CD8-positive, alpha-beta T cell (primary cell): ENCODE measurements at regions of chr19 and their contacts with region 1.

Region 1: GRCh38 chr19:21202865-21203494 is 61.1 kb downstream of the ZNF431 start:
- DNase-seq: peak in 5 of 9 experiments; percentile 16 to 70 (median 22)
- ATAC-seq: peak; percentile 31
- H3K4me3 ChIP-seq: no peak overlapping the region
- H3K4me3 Mint-ChIP-seq: no peak overlapping the region
- H3K27ac ChIP-seq: no peak overlapping the region
- H3K27ac Mint-ChIP-seq: no peak overlapping the region
- H3K4me1 ChIP-seq: no peaks in the 10 kb centered on the region
- H3K4me1 Mint-ChIP-seq: no peaks in the 10 kb centered on the region
- H3K27me3 ChIP-seq: no peaks in the 10 kb centered on the region
- H3K27me3 Mint-ChIP-seq: peaks cover 12% of the 10 kb centered on the region
- CTCF ChIP-seq: peak; percentile 73

Region 2: DNA sequence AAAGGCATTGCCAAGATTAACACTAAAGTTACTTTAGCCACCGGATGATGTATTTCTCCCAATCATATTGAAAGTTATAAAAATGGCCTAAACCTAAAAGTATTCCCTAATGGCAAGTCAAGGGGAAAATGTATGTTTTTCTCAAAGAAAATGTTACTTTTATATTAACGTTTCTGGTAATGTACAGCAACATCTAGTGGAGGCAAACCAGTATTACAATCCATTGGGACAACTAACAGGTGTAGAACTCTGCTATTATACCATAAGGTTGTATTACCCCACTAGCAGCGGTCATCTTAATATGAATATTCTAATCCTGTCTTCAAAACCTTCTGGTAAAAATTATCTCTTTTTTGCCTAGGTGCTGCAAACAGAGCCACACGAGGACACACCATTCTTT is 495.2 kb after region 1 on chr19:
- CTCF ChIA-PET with region 1: interaction called, 28 read pairs
- POLR2A ChIA-PET with region 1: no interaction called
- intact Hi-C with region 1: loop called in 1 of 2 experiments (anchors 1 kb)
- DNase-seq: peak in 2 of 9 experiments; percentile 34 to 61
- ATAC-seq: peak; percentile 57
- H3K4me3 ChIP-seq: no peak overlapping the region
- H3K4me3 Mint-ChIP-seq: no peak overlapping the region
- H3K27ac ChIP-seq: no peak overlapping the region
- H3K27ac Mint-ChIP-seq: no peak overlapping the region
- H3K4me1 ChIP-seq: no peaks in the 10 kb centered on the region
- H3K4me1 Mint-ChIP-seq: no peaks in the 10 kb centered on the region
- H3K27me3 ChIP-seq: no peaks in the 10 kb centered on the region
- H3K27me3 Mint-ChIP-seq: no peaks in the 10 kb centered on the region
- CTCF ChIP-seq: peak; percentile 78

Region 3: GRCh38 chr19:21891081-21891480 is 688.1 kb after region 1 on chr19:
- CTCF ChIA-PET with region 1: no interaction called
- POLR2A ChIA-PET with region 1: no interaction called
- intact Hi-C with region 1: loop called in 1 of 2 experiments (anchors 5 kb)
- DNase-seq: no peak
- ATAC-seq: no peak
- H3K4me3 ChIP-seq: no peak overlapping the region
- H3K4me3 Mint-ChIP-seq: no peak overlapping the region
- H3K27ac ChIP-seq: no peak overlapping the region
- H3K27ac Mint-ChIP-seq: no peak overlapping the region
- H3K4me1 ChIP-seq: no peaks in the 10 kb centered on the region
- H3K4me1 Mint-ChIP-seq: no peaks in the 10 kb centered on the region
- H3K27me3 ChIP-seq: no peaks in the 10 kb centered on the region
- H3K27me3 Mint-ChIP-seq: no peaks in the 10 kb centered on the region
- CTCF ChIP-seq: no peak